ENCODE measurements at regions of chr13 and their contacts with region 1.

Region 1: DNA sequence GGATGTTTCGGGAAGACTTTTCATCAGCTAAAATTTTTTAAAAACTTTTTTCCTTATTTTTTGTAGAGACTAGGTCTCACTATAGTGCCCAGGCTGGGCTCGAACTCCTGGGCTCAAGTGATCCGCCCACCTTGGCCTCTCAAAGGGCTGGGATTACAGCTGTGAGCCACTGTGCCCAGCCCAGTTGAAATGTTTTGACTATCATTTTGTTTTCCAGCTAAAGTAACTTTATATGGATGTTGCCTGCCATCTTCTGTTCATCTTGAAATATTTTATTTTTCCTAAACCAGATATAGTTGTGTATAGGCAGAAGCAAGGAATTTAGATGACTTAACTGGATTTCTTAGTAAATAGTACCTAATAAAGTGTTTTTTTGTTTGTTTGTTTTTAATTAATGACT is 7.0 kb downstream of the CAB39L start:
- DNase-seq: peak; percentile 58 to 76 (median 69)
- H3K4me3 ChIP-seq: no peak overlapping the region
- H3K27ac ChIP-seq: no peak overlapping the region
- H3K4me1 ChIP-seq: no peaks in the 10 kb centered on the region
- H3K27me3 ChIP-seq: no peaks in the 10 kb centered on the region
- CTCF ChIP-seq: peak in 2 of 3 donors; percentile 30 to 51
- EP300 ChIP-seq: no peak
- POLR2A ChIP-seq: no peak

Region 2: DNA sequence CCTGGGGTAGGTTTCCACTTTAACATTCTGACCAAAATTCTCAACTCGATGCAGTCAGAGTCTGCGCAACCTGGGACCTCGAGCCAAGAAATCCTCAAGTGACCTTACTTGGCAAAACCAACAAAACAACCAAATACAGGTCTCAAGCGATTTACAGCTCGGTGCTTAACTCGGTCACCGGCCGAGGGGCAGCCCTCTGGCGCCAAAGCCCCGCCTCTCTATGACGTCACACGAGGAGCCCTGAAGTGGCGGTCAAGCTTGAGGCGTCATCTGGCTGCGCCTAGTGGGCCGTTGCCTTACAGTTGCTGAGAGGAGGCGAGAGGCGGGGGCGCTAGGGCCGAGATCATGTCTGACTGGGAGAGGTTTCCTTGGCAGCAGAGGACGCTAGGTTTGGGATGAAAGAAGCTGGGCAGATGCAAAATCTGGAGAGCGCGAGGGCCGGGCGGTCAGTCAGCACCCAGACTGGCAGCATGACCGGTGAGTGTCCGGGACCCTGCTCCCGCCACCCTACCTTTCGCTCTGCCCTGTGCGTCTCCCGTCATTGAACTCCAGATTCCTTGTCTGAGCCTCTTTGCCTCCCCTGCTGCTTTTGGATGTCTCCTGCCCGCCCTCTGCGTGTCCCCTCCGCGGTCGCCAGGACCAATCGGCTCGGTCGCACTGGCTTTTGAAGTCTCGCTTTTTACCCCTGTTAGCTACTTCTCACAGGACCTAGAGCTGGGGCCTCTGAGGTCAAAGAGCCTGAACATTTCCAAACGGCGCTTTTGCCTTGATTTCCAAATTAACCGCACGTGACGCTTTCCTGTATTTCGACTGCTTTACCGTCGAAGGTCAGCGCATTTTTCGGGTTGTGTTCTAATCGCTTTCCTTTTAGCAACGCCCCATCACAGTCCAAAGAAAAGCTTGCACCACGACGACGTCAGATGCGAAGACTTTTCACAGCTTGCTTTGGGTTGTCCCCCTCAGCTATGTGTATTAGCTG is 189.0 kb before region 1 on chr13 and contains the start of gene CDADC1:
- intact Hi-C with region 1: loop called in 1 of 4 experiments (anchors 5 kb)
- DNase-seq: peak; percentile 98 to 99 (median 99)
- H3K4me3 ChIP-seq: peak within 1 kb of the TSS; percentile 71
- H3K27ac ChIP-seq: peak within 1 kb of the TSS; percentile 69 to 88
- H3K4me1 ChIP-seq: no peaks in the 10 kb centered on the region
- H3K27me3 ChIP-seq: no peaks in the 10 kb centered on the region
- CTCF ChIP-seq: peak in 1 of 3 donors; percentile 33
- EP300 ChIP-seq: peak; percentile 45
- POLR2A ChIP-seq: peak; percentile 92
- total RNA-seq, gene CDADC1: 7.9 to 17.9 (median 14.0) TPM

Region 3: GRCh38 chr13:49295244-49295643 is 141.6 kb before region 1 on chr13:
- intact Hi-C with region 1: loop called (anchors 2 to 5 kb)
- DNase-seq: peak; percentile 79 to 90 (median 85)
- H3K4me3 ChIP-seq: no peak overlapping the region
- H3K27ac ChIP-seq: peak overlapping the region; percentile 27 to 69
- H3K4me1 ChIP-seq: peaks cover 6% of the 10 kb centered on the region
- H3K27me3 ChIP-seq: no peaks in the 10 kb centered on the region
- CTCF ChIP-seq: no peak
- EP300 ChIP-seq: no peak
- POLR2A ChIP-seq: no peak

Region 4: DNA sequence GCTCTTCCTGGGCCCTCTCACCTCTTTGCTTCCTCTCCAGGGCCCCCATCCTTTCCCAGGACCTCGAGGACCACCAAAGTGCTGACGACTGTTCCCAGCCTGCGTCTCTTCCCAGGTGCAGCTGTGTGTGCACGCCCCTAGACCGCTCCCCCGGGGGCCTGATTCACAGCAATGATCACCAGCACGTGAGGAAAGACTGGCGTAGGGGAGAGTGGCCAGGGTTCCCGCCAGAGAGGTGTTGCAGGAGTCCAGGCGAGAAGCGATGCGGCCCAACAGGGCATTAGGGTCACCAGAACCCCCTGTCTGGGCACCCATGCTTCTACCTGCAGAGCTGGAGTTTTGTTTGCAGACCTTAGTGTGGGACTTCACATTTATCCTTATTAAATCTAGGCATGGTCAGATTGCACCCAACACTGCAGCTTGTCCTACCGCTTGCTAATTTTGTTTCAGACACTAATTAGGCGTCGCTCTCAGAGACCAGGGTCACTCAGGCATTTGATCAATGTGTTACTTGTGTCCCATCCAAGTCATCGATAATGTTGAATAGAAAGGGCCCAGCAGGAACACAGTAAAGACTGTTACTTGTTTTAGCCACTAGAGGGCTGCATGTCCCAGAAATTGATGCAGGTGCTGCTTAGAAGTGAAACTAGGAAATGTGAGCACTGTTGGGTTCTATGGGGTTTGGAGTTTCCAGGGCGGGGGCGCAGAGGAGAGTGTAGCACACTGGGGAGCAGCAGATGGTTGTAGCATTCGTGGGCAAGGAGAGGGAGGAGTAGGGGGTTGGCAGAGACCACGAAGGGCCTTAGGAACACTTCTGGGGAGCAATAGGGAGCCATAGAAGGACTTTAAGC is 135.9 kb before region 1 on chr13:
- intact Hi-C with region 1: loop called in 3 of 4 experiments (anchors 2 to 5 kb)
- DNase-seq: peak in 4 of 5 donors; percentile 54 to 70 (median 60)
- H3K4me3 ChIP-seq: peak overlapping the region; percentile 3
- H3K27ac ChIP-seq: peak overlapping the region in 1 of 2 donors; percentile 46
- H3K4me1 ChIP-seq: peaks cover 6% of the 10 kb centered on the region
- H3K27me3 ChIP-seq: no peaks in the 10 kb centered on the region
- CTCF ChIP-seq: peak; percentile 78 to 92 (median 91)
- EP300 ChIP-seq: no peak
- POLR2A ChIP-seq: no peak

Region 5: GRCh38 chr13:49400755-49401659 is 35.9 kb before region 1 on chr13:
- intact Hi-C with region 1: no loop called
- DNase-seq: peak in 1 of 5 donors; percentile 48
- H3K4me3 ChIP-seq: peak overlapping the region; percentile 42
- H3K27ac ChIP-seq: peak overlapping the region; percentile 10 to 82
- H3K4me1 ChIP-seq: peaks cover 2% of the 10 kb centered on the region
- H3K27me3 ChIP-seq: no peaks in the 10 kb centered on the region
- CTCF ChIP-seq: no peak
- EP300 ChIP-seq: no peak
- POLR2A ChIP-seq: peak; percentile 32